CD8-positive, alpha-beta memory T cell (primary cell): ENCODE measurements at regions of chr1 and their contacts with region 1.

Region 1: GRCh38 chr1:171563675-171564074 is 58.4 kb upstream of the MYOCOS start:
- DNase-seq: no peak
- H3K4me3 ChIP-seq: no peak overlapping the region
- H3K4me3 Mint-ChIP-seq: no peak overlapping the region
- H3K27ac ChIP-seq: no peak overlapping the region
- H3K27ac Mint-ChIP-seq: no peak overlapping the region
- H3K4me1 ChIP-seq: no peaks in the 10 kb centered on the region
- H3K4me1 Mint-ChIP-seq: peaks cover 4 to 11% (median 10%) of the 10 kb centered on the region in 3 donors
- H3K27me3 ChIP-seq: no peaks in the 10 kb centered on the region
- H3K27me3 Mint-ChIP-seq: no peaks in the 10 kb centered on the region

Region 2: DNA sequence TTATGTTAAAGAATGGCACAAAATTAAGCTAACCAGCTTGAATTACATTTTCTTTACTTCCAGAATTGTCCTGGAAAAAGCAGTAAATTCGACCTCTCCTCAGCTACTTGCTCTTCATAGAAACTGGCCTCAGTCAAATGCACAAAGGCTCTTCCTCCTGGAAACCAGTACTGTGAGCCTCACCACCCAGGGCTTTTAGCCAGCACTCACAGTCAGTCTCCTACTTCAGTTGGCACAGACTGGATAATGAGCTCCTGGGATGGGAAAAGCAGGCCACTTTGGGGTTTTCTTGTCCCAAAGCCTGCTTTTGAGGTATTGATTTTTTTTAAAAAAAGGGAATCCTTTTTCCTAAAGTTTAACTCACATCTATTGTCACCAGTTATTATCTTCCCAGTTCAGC is 1710.3 kb before region 1 on chr1:
- CTCF ChIA-PET with region 1: no interaction called
- POLR2A ChIA-PET with region 1: interaction called, 10 read pairs
- DNase-seq: no peak
- H3K4me3 ChIP-seq: no peak overlapping the region
- H3K4me3 Mint-ChIP-seq: peak overlapping the region in 1 of 7 donors; percentile 72
- H3K27ac ChIP-seq: no peak overlapping the region
- H3K27ac Mint-ChIP-seq: peak overlapping the region in 4 of 8 donors; percentile 34 to 80 (median 66)
- H3K4me1 ChIP-seq: no peaks in the 10 kb centered on the region
- H3K4me1 Mint-ChIP-seq: peaks cover 4 to 12% (median 8%) of the 10 kb centered on the region in 3 donors
- H3K27me3 ChIP-seq: no peaks in the 10 kb centered on the region
- H3K27me3 Mint-ChIP-seq: no peaks in the 10 kb centered on the region

Region 3: GRCh38 chr1:171286032-171286705 is 277.5 kb before region 1 on chr1:
- CTCF ChIA-PET with region 1: no interaction called
- POLR2A ChIA-PET with region 1: no interaction called
- DNase-seq: no peak
- H3K4me3 ChIP-seq: no peak overlapping the region
- H3K4me3 Mint-ChIP-seq: no peak overlapping the region
- H3K27ac ChIP-seq: no peak overlapping the region
- H3K27ac Mint-ChIP-seq: no peak overlapping the region
- H3K4me1 ChIP-seq: no peaks in the 10 kb centered on the region
- H3K4me1 Mint-ChIP-seq: no peaks in the 10 kb centered on the region
- H3K27me3 ChIP-seq: peaks cover 3% of the 10 kb centered on the region
- H3K27me3 Mint-ChIP-seq: peaks cover 15 to 32% of the 10 kb centered on the region in 2 donors